ENCODE measurements at regions of chrX and their contacts with region 1.

Region 1: DNA sequence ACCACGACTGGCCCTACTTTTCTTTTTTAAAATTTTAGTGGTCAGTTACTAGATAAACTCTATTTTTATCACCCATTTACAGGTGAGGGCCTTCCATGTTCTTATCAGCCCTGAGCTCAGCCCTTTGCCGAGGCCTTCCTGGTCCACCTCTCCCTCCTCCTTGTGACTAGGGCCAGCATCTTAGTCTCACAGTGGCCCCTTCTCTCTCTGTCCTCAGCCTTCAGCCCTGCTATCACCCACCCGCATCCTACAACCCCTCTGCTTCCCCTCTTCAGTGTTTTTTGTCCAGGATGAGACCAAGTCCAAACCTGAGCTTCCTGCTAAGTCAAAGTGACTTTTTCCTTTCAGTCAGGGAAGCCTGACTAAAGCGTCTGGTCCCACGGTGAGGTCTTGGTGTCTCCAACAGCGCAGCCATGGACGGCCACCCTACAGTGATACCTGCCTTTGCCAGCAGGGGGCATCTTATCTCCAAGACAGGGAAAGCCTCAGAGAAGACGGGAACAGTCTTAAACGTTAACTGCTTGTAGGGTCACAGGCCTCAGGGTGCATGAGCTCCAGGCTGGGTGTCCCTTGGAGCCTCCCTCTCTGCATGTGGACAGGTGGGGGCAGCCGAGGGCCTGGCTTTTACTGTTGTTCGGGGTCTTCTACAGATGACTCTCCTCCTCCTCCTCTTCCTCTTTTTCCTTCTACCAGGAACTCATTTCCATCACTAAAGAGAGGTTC is 11.7 kb upstream of the GAGE10 start:
- DNase-seq: peak; percentile 64
- ATAC-seq: peak; percentile 79
- H3K4me3 ChIP-seq: no peak overlapping the region
- H3K27ac ChIP-seq: no peak overlapping the region
- H3K4me1 ChIP-seq: no peaks in the 10 kb centered on the region
- H3K27me3 ChIP-seq: no peaks in the 10 kb centered on the region
- CTCF ChIP-seq: peak; percentile 70

Region 2: GRCh38 chrX:49163555-49164419 is 128.0 kb before region 1 on chrX:
- CTCF ChIA-PET with region 1: no interaction called
- POLR2A ChIA-PET with region 1: no interaction called
- intact Hi-C with region 1: no loop called
- DNase-seq: peak; percentile 88
- ATAC-seq: peak; percentile 65
- H3K4me3 ChIP-seq: peak overlapping the region; percentile 69
- H3K27ac ChIP-seq: peak overlapping the region; percentile 79
- H3K4me1 ChIP-seq: peaks cover 22% of the 10 kb centered on the region
- H3K27me3 ChIP-seq: no peaks in the 10 kb centered on the region
- CTCF ChIP-seq: peak; percentile 66

Region 3: GRCh38 chrX:49754233-49754857 is 462.6 kb after region 1 on chrX:
- CTCF ChIA-PET with region 1: no interaction called
- POLR2A ChIA-PET with region 1: no interaction called
- intact Hi-C with region 1: loop called (anchors 2 kb)
- DNase-seq: peak; percentile 58
- ATAC-seq: peak; percentile 67
- H3K4me3 ChIP-seq: no peak overlapping the region
- H3K27ac ChIP-seq: no peak overlapping the region
- H3K4me1 ChIP-seq: no peaks in the 10 kb centered on the region
- H3K27me3 ChIP-seq: peaks cover 15% of the 10 kb centered on the region
- CTCF ChIP-seq: peak; percentile 73

Region 4: GRCh38 chrX:49838374-49838773 is 546.6 kb after region 1 on chrX:
- CTCF ChIA-PET with region 1: no interaction called
- POLR2A ChIA-PET with region 1: no interaction called
- intact Hi-C with region 1: loop called (anchors 2 kb)
- DNase-seq: peak; percentile 35
- ATAC-seq: peak; percentile 82
- H3K4me3 ChIP-seq: no peak overlapping the region
- H3K27ac ChIP-seq: no peak overlapping the region
- H3K4me1 ChIP-seq: no peaks in the 10 kb centered on the region
- H3K27me3 ChIP-seq: peaks cover 20% of the 10 kb centered on the region
- CTCF ChIP-seq: peak; percentile 67